ENCODE measurements at regions of chr1 and their contacts with region 1.

Region 1: DNA sequence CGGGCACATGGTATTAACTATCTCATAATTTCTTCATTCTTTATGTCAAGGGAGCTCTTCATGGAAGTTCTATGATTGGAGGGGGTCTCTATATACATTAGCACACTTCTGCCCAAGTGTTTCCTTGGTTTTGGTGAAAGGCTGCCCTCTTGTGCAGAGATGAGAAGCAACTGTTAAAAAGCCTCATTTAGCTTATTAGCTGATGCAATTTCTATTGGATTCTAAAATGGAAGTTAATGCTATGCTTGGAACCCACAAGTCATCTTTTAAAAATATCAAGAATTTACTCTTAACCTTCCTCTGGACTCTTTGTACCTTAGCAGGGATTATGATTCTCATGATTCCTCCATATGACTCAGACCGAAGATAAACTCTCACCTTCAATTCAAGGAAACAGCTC is 328.9 kb downstream of the PTBP2 start:
- DNase-seq: peak; percentile 51
- ATAC-seq: peak; percentile 52; the same call in 1 of the 2 replicates
- H3K4me3 ChIP-seq: no peak overlapping the region
- H3K27ac ChIP-seq: no peak overlapping the region
- H3K4me1 ChIP-seq: no peaks in the 10 kb centered on the region
- H3K27me3 ChIP-seq: no peaks in the 10 kb centered on the region
- CTCF ChIP-seq: peak; percentile 66

Region 2: DNA sequence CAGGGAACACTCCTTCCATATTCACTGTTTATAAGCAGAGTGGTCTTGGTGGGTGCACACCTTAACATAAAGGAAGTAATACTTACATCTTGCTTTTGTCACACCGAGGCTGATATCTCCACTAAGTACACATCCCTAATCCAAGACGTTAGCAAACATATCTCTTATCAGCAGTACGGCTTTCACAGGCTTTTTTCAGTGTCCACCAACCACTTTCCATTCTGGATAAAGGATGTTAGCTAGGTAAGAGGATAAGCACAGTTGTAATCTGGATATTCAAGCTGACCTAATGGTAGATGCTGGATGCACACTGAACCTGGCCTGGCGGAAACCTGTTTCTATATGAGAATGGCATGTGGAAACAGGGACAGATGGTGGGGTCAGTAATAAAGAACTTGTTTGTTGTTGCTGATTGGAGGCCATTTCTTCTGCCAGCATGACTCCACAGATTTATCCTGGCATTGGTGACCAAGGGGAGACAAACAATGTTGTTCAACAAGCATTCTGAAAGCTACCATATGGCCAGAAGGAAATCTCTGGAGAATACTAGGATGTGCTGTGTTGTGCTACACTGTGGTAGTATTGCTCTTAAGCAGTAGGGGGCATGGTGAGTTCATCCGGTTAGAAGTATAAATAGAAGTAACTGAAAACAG is 87.5 kb after region 1 on chr1:
- CTCF ChIA-PET with region 1: no interaction called
- POLR2A ChIA-PET with region 1: no interaction called
- intact Hi-C with region 1: loop called (anchors 2 kb)
- DNase-seq: peak; percentile 70
- ATAC-seq: peak; percentile 98
- H3K4me3 ChIP-seq: no peak overlapping the region
- H3K27ac ChIP-seq: no peak overlapping the region
- H3K4me1 ChIP-seq: no peaks in the 10 kb centered on the region; the same call in 1 of the 2 replicates
- H3K27me3 ChIP-seq: no peaks in the 10 kb centered on the region
- CTCF ChIP-seq: peak; percentile 83